ENCODE measurements at regions of chr2 and their contacts with region 1.

Region 1: DNA sequence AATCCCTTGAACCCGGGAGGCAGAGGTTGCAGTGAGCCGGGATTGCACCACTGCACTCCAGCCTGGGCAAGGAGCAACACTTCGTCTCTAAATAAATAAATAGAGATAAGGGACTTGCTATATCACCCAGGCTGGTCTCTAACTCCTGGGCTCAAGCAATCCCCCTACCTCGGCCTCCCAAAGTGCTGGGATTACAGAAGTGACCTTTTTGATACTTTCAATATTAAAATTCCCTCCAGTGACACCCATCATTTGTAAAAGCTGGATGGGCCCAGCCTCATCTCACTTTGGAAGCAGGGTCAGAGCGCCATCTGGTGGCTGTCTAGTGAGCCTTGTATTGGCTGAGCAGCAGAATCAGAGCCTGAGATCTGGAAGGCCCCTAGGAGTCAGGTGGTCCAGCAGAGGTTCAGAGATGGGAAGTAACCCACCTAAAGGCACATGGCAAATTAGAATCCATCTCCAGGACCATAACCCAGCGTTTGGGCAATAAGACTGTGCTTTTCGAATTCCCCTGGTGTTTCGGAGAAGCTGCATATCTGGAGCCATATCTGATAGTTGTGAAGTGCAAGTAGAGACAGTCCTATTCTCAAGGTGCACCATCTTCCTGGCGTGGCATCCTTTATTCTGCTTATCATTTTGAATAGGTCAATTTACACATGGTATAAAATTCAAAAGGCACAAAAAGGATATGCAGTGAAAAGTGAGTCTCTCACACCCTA is 18.3 kb upstream of the SLC35F6 start:
- DNase-seq: peak in 1 of 2 experiments; percentile 90
- H3K4me3 ChIP-seq: no peak overlapping the region
- H3K27ac ChIP-seq: no peak overlapping the region
- H3K4me1 ChIP-seq: peaks cover 0 to under 1% (median under 1%) of the 10 kb centered on the region in 4 experiments; a peak in 4 of 7 replicates
- H3K27me3 ChIP-seq: peaks cover 0 to 5% (median 0%) of the 10 kb centered on the region in 4 experiments; a peak in 3 of 7 replicates
- CTCF ChIP-seq: peak; percentile 76 to 95 (median 91)
- EP300 ChIP-seq: no peak
- POLR2A ChIP-seq: no peak
- RAD21 ChIP-seq: peak; percentile 97 to 98

Region 2: GRCh38 chr2:26591619-26592505 is 153.9 kb before region 1 on chr2:
- CTCF ChIA-PET with region 1: interaction called, 48 read pairs
- POLR2A ChIA-PET with region 1: no interaction called
- DNase-seq: peak in 1 of 2 experiments; percentile 44
- H3K4me3 ChIP-seq: no peak overlapping the region
- H3K27ac ChIP-seq: no peak overlapping the region
- H3K4me1 ChIP-seq: peaks cover 0 to 4% (median 1%) of the 10 kb centered on the region in 4 experiments; a peak in 3 of 7 replicates
- H3K27me3 ChIP-seq: peaks cover 0 to 3% (median 0%) of the 10 kb centered on the region in 4 experiments; a peak in 1 of 7 replicates
- CTCF ChIP-seq: no peak
- EP300 ChIP-seq: no peak
- POLR2A ChIP-seq: no peak
- RAD21 ChIP-seq: no peak

Region 3: DNA sequence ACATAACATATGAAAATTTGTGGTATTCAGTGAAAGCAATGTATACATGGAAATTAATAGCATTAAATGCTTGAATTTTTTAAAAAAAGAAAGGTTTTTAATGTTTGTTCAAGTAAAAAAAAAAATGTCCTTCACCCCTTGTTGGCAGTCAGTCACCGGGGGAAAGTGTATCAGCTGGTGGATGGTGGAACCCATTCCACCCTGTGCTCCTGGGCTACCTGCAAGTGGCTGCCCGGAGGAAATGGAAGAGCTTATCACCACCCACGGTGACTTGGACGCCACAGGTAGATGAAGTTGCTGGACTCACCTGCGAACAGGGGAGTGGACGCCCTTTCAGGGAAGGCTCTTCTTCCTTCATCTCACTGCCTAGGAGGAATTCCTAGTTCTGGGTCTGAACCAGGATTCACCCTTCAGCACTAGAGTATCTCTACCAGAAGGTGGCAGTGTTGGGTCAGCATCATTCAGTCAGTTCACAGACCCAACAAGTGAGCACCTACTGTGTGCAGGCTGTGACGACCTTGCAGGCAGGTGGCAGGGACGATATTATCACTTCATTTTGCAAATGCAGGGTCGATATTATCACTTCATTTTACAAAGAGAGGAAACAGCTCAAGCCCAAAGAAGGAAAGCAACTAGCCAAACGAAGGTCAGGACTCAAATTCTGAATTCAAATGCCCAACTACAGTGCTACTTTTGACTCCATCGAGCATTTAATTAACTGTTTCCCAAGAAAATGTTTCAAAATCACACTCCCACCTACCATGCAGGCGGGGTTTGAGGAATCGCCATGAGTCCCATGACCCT is 140.4 kb before region 1 on chr2:
- CTCF ChIA-PET with region 1: interaction called, 367 read pairs
- POLR2A ChIA-PET with region 1: interaction called, 4 read pairs
- DNase-seq: peak; percentile 36 to 72
- H3K4me3 ChIP-seq: no peak overlapping the region
- H3K27ac ChIP-seq: no peak overlapping the region
- H3K4me1 ChIP-seq: no peaks in the 10 kb centered on the region; a peak in 2 of 7 replicates
- H3K27me3 ChIP-seq: no peaks in the 10 kb centered on the region
- CTCF ChIP-seq: peak; percentile 62 to 96 (median 90)
- EP300 ChIP-seq: no peak
- POLR2A ChIP-seq: no peak
- RAD21 ChIP-seq: peak; percentile 94 to 98

Region 4: GRCh38 chr2:26647059-26647657 is 98.6 kb before region 1 on chr2:
- CTCF ChIA-PET with region 1: interaction called, 11 read pairs
- POLR2A ChIA-PET with region 1: no interaction called
- DNase-seq: peak in 1 of 2 experiments; percentile 45
- H3K4me3 ChIP-seq: no peak overlapping the region
- H3K27ac ChIP-seq: no peak overlapping the region
- H3K4me1 ChIP-seq: peaks cover 0 to 4% (median 3%) of the 10 kb centered on the region in 4 experiments; a peak in 5 of 7 replicates
- H3K27me3 ChIP-seq: peaks cover 0 to 3% (median 0%) of the 10 kb centered on the region in 4 experiments; a peak in 2 of 7 replicates
- CTCF ChIP-seq: no peak
- EP300 ChIP-seq: no peak
- POLR2A ChIP-seq: no peak
- RAD21 ChIP-seq: no peak

Region 5: DNA sequence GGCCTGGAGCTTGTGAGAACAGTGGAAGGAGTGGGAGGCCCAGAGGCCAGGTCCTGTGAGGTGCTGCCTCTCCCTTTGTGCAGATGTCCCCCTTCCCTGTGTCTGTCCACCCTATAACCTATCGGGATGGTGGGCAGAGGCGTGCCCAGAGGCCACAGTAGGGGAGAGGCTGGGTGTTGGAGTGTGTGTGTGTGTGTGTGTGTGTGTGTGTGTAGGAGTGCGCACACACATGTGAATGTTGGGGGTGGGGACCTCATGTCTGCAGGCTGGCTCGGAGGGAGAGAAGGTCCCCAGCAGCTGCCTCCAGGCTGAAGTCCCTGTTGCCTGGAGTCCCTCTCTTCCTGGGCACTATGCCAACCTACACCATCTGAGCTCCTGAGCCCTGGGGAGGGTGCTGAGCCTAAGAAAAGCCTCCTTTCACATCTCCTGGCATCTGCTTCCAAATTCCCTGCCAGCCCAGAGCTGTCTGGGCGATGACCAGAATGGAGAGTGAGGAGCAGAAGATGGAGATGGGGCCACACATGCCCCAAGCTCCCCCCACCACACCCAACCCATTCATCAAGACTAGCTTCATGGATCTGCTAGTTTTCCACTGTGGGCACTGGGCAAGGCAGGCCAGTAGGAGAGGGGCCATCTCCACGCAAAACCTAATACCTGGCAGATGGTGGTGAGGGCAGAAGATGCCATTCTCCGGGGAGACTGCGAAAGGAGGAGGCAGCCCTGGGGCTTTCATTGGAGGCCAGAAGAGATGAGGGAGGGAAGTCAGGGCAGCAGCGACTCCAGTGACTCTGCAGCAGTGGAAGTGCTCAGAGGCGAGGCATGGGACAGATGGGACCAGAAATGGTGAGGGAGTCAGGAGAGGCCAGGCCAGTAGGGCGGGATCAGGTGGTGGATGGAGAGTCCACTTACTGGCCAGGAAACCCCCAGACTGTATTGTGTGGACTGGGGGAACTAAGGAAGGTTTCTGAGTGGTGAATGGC is 33.0 kb before region 1 on chr2:
- CTCF ChIA-PET with region 1: interaction called, 26 read pairs
- POLR2A ChIA-PET with region 1: no interaction called
- DNase-seq: no peak
- H3K4me3 ChIP-seq: no peak overlapping the region
- H3K27ac ChIP-seq: no peak overlapping the region
- H3K4me1 ChIP-seq: no peaks in the 10 kb centered on the region
- H3K27me3 ChIP-seq: no peaks in the 10 kb centered on the region; a peak in 1 of 7 replicates
- CTCF ChIP-seq: no peak
- EP300 ChIP-seq: no peak
- POLR2A ChIP-seq: no peak
- RAD21 ChIP-seq: no peak

Region 6: DNA sequence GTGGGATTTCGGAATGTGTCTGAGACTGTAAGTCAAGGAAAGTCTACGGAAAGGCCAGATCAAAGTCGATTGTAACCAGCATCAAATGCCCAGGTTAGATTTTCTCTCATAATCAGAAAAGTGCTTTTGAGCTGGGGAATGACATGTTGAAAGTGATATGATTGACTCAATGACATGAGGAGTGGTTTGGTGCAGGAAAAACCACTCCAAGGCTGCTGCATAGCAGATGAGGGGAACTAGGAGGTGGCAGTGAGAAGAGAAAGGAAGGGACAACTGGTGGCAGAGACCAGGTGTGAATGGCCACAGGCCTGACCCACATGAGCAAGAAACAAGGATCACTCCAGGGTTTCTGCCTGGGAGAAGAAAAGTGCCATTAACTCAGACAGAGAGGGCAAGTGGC is 19.1 kb after region 1 on chr2:
- CTCF ChIA-PET with region 1: interaction called, 11 read pairs
- POLR2A ChIA-PET with region 1: interaction called, 3 read pairs
- DNase-seq: no peak
- H3K4me3 ChIP-seq: peak overlapping the region; percentile 78 to 90 (median 86)
- H3K27ac ChIP-seq: no peak overlapping the region
- H3K4me1 ChIP-seq: peaks cover 0 to 9% (median 4%) of the 10 kb centered on the region in 4 experiments; a peak in 4 of 7 replicates
- H3K27me3 ChIP-seq: peaks cover 0 to 6% (median 0%) of the 10 kb centered on the region in 4 experiments; a peak in 2 of 7 replicates
- CTCF ChIP-seq: no peak
- EP300 ChIP-seq: no peak
- POLR2A ChIP-seq: no peak
- RAD21 ChIP-seq: no peak

Region 7: GRCh38 chr2:26807788-26808460 is 62.2 kb after region 1 on chr2:
- CTCF ChIA-PET with region 1: no interaction called
- POLR2A ChIA-PET with region 1: no interaction called
- DNase-seq: no peak
- H3K4me3 ChIP-seq: no peak overlapping the region
- H3K27ac ChIP-seq: no peak overlapping the region
- H3K4me1 ChIP-seq: no peaks in the 10 kb centered on the region; a peak in 2 of 7 replicates
- H3K27me3 ChIP-seq: no peaks in the 10 kb centered on the region; a peak in 1 of 7 replicates
- CTCF ChIP-seq: no peak
- EP300 ChIP-seq: no peak
- POLR2A ChIP-seq: no peak
- RAD21 ChIP-seq: no peak